Aorta (tissue), 5 donors: ENCODE measurements at regions of chr5 and their contacts with region 1.

Region 1: GRCh38 chr5:17216176-17216973 is 1.1 kb upstream of the BASP1 start:
- DNase-seq: peak; percentile 86 to 90
- ATAC-seq: peak; percentile 77
- H3K4me3 ChIP-seq: no peak overlapping the region
- H3K27ac ChIP-seq: peak overlapping the region in 1 of 2 donors; percentile 13
- H3K4me1 ChIP-seq: no peaks in the 10 kb centered on the region
- H3K27me3 ChIP-seq: no peaks in the 10 kb centered on the region

Region 2: GRCh38 chr5:17743580-17744435 is 527.4 kb after region 1 on chr5:
- intact Hi-C with region 1: loop called in 1 of 2 experiments (anchors 10 kb)
- DNase-seq: no peak
- ATAC-seq: no peak
- H3K4me3 ChIP-seq: peak overlapping the region in 1 of 2 donors; percentile 28
- H3K27ac ChIP-seq: peak overlapping the region in 1 of 2 donors; percentile 72
- H3K4me1 ChIP-seq: peaks cover 2 to 4% of the 10 kb centered on the region in 2 donors
- H3K27me3 ChIP-seq: no peaks in the 10 kb centered on the region

Region 3: GRCh38 chr5:17928581-17928981 is 712.2 kb after region 1 on chr5:
- intact Hi-C with region 1: loop called in 1 of 2 experiments (anchors 10 kb)
- DNase-seq: peak; percentile 73 to 78
- ATAC-seq: peak; percentile 77
- H3K4me3 ChIP-seq: no peak overlapping the region
- H3K27ac ChIP-seq: peak overlapping the region in 1 of 2 donors; percentile 57
- H3K4me1 ChIP-seq: no peaks in the 10 kb centered on the region
- H3K27me3 ChIP-seq: no peaks in the 10 kb centered on the region

Region 4: DNA sequence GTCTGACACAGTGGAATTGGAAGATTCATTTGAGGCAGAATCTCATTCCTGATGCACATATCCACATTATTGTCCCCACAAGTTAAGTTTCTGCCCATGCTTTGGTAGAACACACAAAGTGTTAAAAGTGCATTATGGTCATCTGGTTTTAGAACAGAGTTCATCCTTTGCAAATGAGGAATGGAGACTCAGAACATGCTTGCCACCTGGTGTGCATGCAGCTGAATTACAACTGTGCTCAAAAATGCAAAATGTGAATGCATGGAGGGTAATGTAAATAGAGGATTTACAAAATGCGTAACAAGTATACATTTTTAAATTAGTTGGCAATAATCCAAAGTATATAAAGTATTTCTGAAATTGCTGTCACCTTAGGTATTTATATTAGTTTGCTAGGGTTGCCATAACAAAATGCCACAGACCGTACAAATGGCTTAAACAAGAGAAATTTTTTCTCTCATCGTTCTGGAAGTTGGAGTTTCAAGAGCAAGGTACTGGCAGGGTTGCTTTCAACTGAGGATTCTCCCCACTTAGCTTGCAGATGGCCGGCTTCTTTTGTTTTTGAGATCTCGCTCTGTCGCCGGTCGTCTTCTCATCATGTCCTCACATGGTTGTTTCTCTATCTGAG is 1089.0 kb after region 1 on chr5:
- intact Hi-C with region 1: loop called (anchors 5 to 10 kb)
- DNase-seq: no peak
- ATAC-seq: no peak
- H3K4me3 ChIP-seq: no peak overlapping the region
- H3K27ac ChIP-seq: no peak overlapping the region
- H3K4me1 ChIP-seq: no peaks in the 10 kb centered on the region
- H3K27me3 ChIP-seq: no peaks in the 10 kb centered on the region